GM12878 (cell line): ENCODE measurements at regions of chr13 and their contacts with region 1.

Region 1: GRCh38 chr13:41061075-41061913 is at the start of gene WBP4:
- DNase-seq: peak; percentile 82
- ATAC-seq: peak; percentile 80
- H3K4me3 ChIP-seq: peak within 1 kb of the TSS; percentile 94
- H3K27ac ChIP-seq: peak within 1 kb of the TSS; percentile 96
- H3K4me1 ChIP-seq: peaks cover 3% of the 10 kb centered on the region; the same call in 1 of the 2 replicates
- H3K27me3 ChIP-seq: no peaks in the 10 kb centered on the region
- CTCF ChIP-seq: peak in 1 of 3 experiments; percentile 7; a peak in 2 of 6 replicates
- EP300 ChIP-seq: peak; percentile 34 to 38; a peak in 2 of 4 replicates
- POLR2A ChIP-seq: peak; percentile 89
- RAD21 ChIP-seq: no peak
- polyA plus RNA-seq, gene WBP4: 9.7 to 12.5 TPM

Region 2: DNA sequence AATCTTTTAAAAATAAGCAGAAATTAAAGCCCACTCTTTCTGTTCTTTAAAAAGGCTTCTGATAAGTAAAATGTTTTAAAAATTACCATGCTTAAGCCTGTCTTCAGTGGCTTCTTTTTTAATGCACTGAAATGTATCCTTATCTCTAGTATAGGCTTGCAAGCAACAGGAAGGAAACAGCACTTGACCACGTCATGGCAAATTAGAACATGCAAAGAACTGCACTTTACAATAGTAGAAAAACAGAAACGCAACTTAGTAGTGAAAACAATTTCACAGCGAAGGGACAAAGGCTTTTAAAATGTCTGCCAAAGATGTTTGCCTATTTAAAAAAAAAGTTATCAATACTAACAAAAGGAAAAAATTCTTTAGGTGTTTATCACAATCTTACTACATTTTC is 78.5 kb before region 1 on chr13:
- CTCF ChIA-PET with region 1: interaction called, 8 read pairs
- POLR2A ChIA-PET with region 1: interaction called, 4 read pairs
- RAD21 ChIA-PET with region 1: interaction called, 172 read pairs
- SMC1A ChIA-PET with region 1: interaction called, 3 read pairs
- in situ Hi-C with region 1: loop called (anchors 5 kb)
- intact Hi-C with region 1: loop called (anchors 2 kb)
- DNase-seq: peak; percentile 84
- ATAC-seq: peak; percentile 53
- H3K4me3 ChIP-seq: peak overlapping the region; percentile 16; the same call in 1 of the 2 replicates
- H3K27ac ChIP-seq: peak overlapping the region; percentile 82
- H3K4me1 ChIP-seq: peaks cover 16% of the 10 kb centered on the region
- H3K27me3 ChIP-seq: no peaks in the 10 kb centered on the region
- CTCF ChIP-seq: no peak
- EP300 ChIP-seq: peak; percentile 22 to 59; a peak in 1 of 4 replicates
- POLR2A ChIP-seq: no peak
- RAD21 ChIP-seq: no peak

Region 3: GRCh38 chr13:40992678-40993518 is 68.4 kb before region 1 on chr13:
- CTCF ChIA-PET with region 1: interaction called, 4 read pairs
- POLR2A ChIA-PET with region 1: interaction called, 12 read pairs
- RAD21 ChIA-PET with region 1: interaction called, 4 read pairs
- SMC1A ChIA-PET with region 1: interaction called, 3 read pairs
- in situ Hi-C with region 1: no loop called
- intact Hi-C with region 1: no loop called
- DNase-seq: no peak
- ATAC-seq: peak; percentile 34
- H3K4me3 ChIP-seq: no peak overlapping the region; the same call in 1 of the 2 replicates
- H3K27ac ChIP-seq: peak overlapping the region; percentile 92
- H3K4me1 ChIP-seq: peaks cover 46% of the 10 kb centered on the region
- H3K27me3 ChIP-seq: no peaks in the 10 kb centered on the region
- CTCF ChIP-seq: peak; percentile 10 to 49 (median 12); a peak in 4 of 6 replicates
- EP300 ChIP-seq: no peak
- POLR2A ChIP-seq: no peak
- RAD21 ChIP-seq: peak; percentile 51

Region 4: GRCh38 chr13:41019011-41019487 is 42.2 kb before region 1 on chr13 and contains the start of gene ELF1:
- CTCF ChIA-PET with region 1: interaction called, 32 read pairs
- POLR2A ChIA-PET with region 1: interaction called, 23 read pairs
- RAD21 ChIA-PET with region 1: interaction called, 15 read pairs
- SMC1A ChIA-PET with region 1: interaction called, 14 read pairs
- in situ Hi-C with region 1: no loop called
- intact Hi-C with region 1: loop called (anchors 2 kb)
- DNase-seq: peak; percentile 88
- ATAC-seq: peak; percentile 79
- H3K4me3 ChIP-seq: peak within 1 kb of the TSS; percentile 90
- H3K27ac ChIP-seq: peak within 1 kb of the TSS; percentile 100
- H3K4me1 ChIP-seq: peaks cover 7% of the 10 kb centered on the region
- H3K27me3 ChIP-seq: no peaks in the 10 kb centered on the region
- CTCF ChIP-seq: no peak
- EP300 ChIP-seq: peak; percentile 78 to 95
- POLR2A ChIP-seq: peak; percentile 47
- RAD21 ChIP-seq: 0 out of 2 replicates have a peak, but pooled peaks have one; percentile 13
- polyA plus RNA-seq, gene ELF1: 43.3 to 43.5 TPM

Region 5: DNA sequence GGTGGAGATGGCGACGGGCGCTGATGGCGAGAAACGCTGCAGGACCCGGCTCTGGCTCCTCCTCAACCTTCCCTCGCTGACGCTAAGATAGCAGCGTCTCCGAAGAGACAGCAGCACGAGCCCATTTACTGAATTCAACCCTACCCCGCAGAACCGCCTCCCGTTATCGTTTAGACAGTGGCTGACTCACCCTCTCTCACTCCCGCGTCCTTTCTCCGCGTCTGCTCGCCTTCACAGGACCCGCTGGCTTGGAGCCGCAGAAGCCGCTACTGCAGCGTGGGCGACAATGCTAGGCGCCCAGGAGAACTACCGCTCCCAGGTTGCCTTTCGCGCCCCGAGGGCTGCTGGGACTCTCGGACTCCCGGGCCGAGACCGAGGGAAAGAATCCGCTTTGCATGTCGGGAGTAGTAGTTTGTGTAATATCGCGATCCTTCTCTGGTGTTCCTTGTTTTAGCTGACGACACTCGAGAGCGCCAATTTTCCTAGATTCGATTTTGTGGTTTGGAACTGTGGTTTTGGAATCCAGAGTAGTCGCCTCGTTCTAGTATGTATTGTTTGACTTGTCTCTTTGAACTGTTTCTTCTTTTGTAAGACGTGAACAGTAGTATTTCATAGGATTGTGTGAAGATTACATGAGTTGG is 71.3 kb after region 1 on chr13 and contains the start of gene KBTBD6:
- CTCF ChIA-PET with region 1: interaction called, 4 read pairs
- POLR2A ChIA-PET with region 1: interaction called, 3 read pairs
- RAD21 ChIA-PET with region 1: interaction called, 5 read pairs
- SMC1A ChIA-PET with region 1: no interaction called
- in situ Hi-C with region 1: no loop called
- intact Hi-C with region 1: loop called (anchors 2 kb)
- DNase-seq: peak; percentile 92
- ATAC-seq: peak; percentile 96
- H3K4me3 ChIP-seq: peak within 1 kb of the TSS; percentile 74
- H3K27ac ChIP-seq: peak within 1 kb of the TSS; percentile 71
- H3K4me1 ChIP-seq: peaks cover 8% of the 10 kb centered on the region
- H3K27me3 ChIP-seq: no peaks in the 10 kb centered on the region
- CTCF ChIP-seq: no peak
- EP300 ChIP-seq: no peak
- POLR2A ChIP-seq: peak; percentile 78
- RAD21 ChIP-seq: no peak
- polyA plus RNA-seq, gene KBTBD6: 1.9 to 2.4 TPM

Region 6: GRCh38 chr13:41179593-41180250 is 118.4 kb after region 1 on chr13:
- CTCF ChIA-PET with region 1: no interaction called
- POLR2A ChIA-PET with region 1: no interaction called
- RAD21 ChIA-PET with region 1: no interaction called
- SMC1A ChIA-PET with region 1: no interaction called
- in situ Hi-C with region 1: no loop called
- intact Hi-C with region 1: no loop called
- DNase-seq: no peak
- ATAC-seq: no peak
- H3K4me3 ChIP-seq: no peak overlapping the region
- H3K27ac ChIP-seq: no peak overlapping the region
- H3K4me1 ChIP-seq: no peaks in the 10 kb centered on the region
- H3K27me3 ChIP-seq: no peaks in the 10 kb centered on the region
- CTCF ChIP-seq: no peak
- EP300 ChIP-seq: no peak
- POLR2A ChIP-seq: no peak
- RAD21 ChIP-seq: no peak

Region 7: DNA sequence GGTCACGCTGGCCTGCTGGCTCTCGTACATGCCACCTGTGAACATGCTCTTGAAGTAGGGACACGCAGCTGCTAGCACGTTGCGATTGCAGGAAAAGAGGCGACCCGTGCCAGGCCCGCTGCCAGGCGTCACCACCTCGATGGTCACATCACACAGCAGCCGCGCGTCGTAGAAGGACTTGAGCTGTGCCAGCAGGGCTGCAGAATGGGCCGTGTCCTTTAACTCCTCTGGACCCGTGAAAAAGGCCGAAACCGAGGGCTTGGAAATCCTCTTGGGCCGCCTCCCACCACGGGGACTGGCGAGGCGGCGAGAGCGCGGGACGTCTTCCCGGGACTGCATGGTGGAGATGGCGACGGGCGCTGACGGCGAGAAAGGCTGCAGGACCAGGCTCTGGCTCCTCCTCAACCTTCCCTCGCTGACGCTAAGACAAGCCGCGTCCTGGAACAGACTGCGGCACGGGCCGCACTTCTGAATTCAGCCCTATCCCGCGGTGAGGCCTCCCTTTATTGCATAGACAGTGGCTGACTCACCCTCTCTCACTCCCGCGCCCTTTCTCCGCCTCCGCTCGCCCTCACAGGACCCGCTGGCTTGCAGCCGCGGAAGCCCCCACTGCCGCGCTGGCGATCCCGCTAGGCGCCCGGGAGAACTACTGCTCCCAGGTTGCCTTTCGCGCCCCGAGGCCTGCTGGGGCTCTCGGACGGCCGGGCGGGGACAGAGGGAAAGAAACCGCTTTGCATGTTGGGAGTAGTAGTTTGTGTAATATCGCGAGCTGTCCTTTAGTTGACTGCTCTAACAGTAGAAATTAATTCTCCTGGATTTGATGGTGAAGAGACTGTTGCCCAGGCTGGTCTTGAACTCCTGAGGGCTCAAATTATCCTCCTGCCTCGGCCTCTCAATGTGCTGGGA is 132.9 kb after region 1 on chr13 and contains the start of gene KBTBD7:
- CTCF ChIA-PET with region 1: interaction called, 6 read pairs
- POLR2A ChIA-PET with region 1: no interaction called
- RAD21 ChIA-PET with region 1: no interaction called
- SMC1A ChIA-PET with region 1: interaction called, 4 read pairs
- in situ Hi-C with region 1: no loop called
- intact Hi-C with region 1: loop called (anchors 5 kb)
- DNase-seq: peak; percentile 67
- ATAC-seq: peak; percentile 99
- H3K4me3 ChIP-seq: peak within 1 kb of the TSS; percentile 86
- H3K27ac ChIP-seq: peak within 1 kb of the TSS; percentile 69
- H3K4me1 ChIP-seq: peaks cover 4% of the 10 kb centered on the region
- H3K27me3 ChIP-seq: no peaks in the 10 kb centered on the region
- CTCF ChIP-seq: no peak
- EP300 ChIP-seq: no peak
- POLR2A ChIP-seq: peak; percentile 76
- RAD21 ChIP-seq: no peak
- polyA plus RNA-seq, gene KBTBD7: 1.8 to 2.8 TPM

Region 8: DNA sequence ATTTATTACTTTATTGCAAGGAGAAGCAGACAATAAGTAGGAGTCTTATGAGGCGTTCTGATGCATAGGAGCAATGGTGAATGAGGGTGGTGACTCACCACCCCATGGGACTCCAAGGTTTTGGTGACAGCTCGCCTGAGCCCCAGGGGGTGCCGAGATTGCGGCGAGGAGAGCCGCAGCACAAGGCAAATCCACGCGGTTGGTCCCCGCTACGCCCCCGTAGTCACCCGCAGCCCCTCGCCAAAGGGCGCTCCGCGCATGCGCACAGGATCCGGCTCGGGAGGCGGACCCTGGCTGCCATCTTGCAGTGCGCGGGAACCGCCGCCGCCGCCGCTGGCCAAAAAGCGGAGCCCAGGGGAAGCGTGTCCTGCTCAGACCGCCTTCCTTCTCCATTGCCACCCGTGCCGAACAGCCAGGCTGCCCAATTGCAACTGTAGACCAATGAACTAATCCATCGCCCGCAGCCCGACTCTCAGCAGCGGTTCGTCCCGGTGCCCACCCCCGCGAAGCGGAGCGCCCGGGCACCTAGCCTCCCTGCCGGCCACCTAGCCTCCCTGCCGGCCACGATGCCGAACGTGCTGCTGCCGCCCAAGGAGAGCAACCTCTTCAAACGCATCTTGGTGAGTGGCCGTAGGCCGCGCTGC is 249.8 kb after region 1 on chr13 and contains the start of gene NAA16:
- CTCF ChIA-PET with region 1: no interaction called
- POLR2A ChIA-PET with region 1: interaction called, 3 read pairs
- RAD21 ChIA-PET with region 1: no interaction called
- SMC1A ChIA-PET with region 1: no interaction called
- in situ Hi-C with region 1: no loop called
- intact Hi-C with region 1: loop called (anchors 2 kb)
- DNase-seq: peak; percentile 76
- ATAC-seq: peak; percentile 84
- H3K4me3 ChIP-seq: peak within 1 kb of the TSS; percentile 99
- H3K27ac ChIP-seq: peak within 1 kb of the TSS; percentile 83
- H3K4me1 ChIP-seq: peaks cover 6% of the 10 kb centered on the region; the same call in 1 of the 2 replicates
- H3K27me3 ChIP-seq: no peaks in the 10 kb centered on the region
- CTCF ChIP-seq: no peak
- EP300 ChIP-seq: no peak
- POLR2A ChIP-seq: peak; percentile 85
- RAD21 ChIP-seq: no peak
- polyA plus RNA-seq, gene NAA16: 5.4 to 6.3 TPM